ENCODE measurements at regions of chr5 and their contacts with region 1.

Region 1: GRCh38 chr5:53109443-53110127 is at the start of gene MOCS2:
- DNase-seq: peak; percentile 93
- H3K4me3 Mint-ChIP-seq: peak within 1 kb of the TSS; percentile 94
- H3K27ac Mint-ChIP-seq: peak within 1 kb of the TSS; percentile 78
- H3K4me1 Mint-ChIP-seq: peaks cover 42% of the 10 kb centered on the region
- H3K27me3 Mint-ChIP-seq: no peaks in the 10 kb centered on the region
- total RNA-seq, gene MOCS2: 20.7 to 21.6 TPM

Region 2: GRCh38 chr5:53080271-53080670 is 29.3 kb before region 1 on chr5:
- CTCF ChIA-PET with region 1: no interaction called
- POLR2A ChIA-PET with region 1: no interaction called
- intact Hi-C with region 1: loop called (anchors 1 kb)
- DNase-seq: no peak
- H3K4me3 Mint-ChIP-seq: no peak overlapping the region
- H3K27ac Mint-ChIP-seq: no peak overlapping the region
- H3K4me1 Mint-ChIP-seq: peaks cover 28% of the 10 kb centered on the region
- H3K27me3 Mint-ChIP-seq: no peaks in the 10 kb centered on the region

Region 3: DNA sequence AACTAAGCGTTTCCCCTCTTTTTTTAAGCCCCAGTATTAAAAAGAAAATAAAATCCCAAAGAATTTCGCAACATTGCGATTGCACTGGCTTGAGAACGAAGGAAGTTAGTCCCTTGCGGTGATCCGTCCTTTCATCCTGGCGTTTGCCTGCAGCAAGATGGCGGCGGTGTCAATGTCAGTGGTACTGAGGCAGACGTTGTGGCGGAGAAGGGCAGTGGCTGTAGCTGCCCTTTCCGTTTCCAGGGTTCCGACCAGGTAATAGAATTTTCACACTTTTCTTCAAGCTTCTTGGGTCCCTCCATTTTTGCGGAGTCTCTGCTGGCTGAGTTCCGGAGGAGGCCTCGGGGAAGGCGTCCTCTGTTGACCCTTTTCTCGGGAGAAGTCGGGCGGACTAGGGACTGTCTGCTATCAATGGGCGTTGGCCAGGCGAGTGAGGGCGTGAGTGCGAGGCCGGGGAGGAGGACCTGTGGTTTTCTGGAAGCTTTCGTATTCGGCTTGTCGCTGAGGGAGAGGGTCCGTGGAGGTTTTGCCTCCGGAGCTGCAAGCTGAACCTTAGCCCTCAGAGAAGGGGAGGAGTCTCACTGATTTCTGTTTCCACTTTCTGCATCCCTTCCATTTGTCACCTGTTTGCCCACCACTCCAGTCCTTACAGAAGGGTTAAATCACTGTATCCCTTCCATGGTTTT is 451.1 kb after region 1 on chr5 and contains the start of gene NDUFS4:
- CTCF ChIA-PET with region 1: no interaction called
- POLR2A ChIA-PET with region 1: no interaction called
- intact Hi-C with region 1: loop called (anchors 5 kb)
- DNase-seq: peak; percentile 89
- H3K4me3 Mint-ChIP-seq: peak within 1 kb of the TSS; percentile 99
- H3K27ac Mint-ChIP-seq: peak within 1 kb of the TSS; percentile 90
- H3K4me1 Mint-ChIP-seq: peaks cover 29% of the 10 kb centered on the region
- H3K27me3 Mint-ChIP-seq: peaks cover 15% of the 10 kb centered on the region
- total RNA-seq, gene NDUFS4: 68.5 to 70.5 TPM